Left colon (tissue), 2 donors: ENCODE measurements at regions of chr4 and their contacts with region 1.

Region 1: DNA sequence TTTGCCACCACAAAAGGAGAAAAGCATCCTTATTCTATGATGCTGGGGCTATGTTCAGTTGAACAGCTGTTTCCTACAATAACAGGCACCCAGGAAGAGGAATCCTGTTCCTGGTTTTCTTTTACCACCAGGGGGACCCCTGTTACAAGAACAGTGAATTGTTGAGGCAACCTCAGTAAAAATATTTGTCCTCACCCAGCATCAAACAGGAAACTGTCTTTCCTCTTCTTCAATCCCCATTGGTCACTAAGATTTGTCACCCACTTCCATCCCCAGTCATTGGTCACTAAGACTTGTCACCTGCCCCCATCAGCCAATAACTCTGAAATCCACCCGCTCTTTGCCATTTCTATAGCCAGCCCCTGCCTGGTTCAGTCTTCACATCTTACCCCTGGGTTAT is 143.5 kb upstream of the GALNT7 start:
- DNase-seq: peak; percentile 33 to 35
- ATAC-seq: peak; percentile 95

Region 2: DNA sequence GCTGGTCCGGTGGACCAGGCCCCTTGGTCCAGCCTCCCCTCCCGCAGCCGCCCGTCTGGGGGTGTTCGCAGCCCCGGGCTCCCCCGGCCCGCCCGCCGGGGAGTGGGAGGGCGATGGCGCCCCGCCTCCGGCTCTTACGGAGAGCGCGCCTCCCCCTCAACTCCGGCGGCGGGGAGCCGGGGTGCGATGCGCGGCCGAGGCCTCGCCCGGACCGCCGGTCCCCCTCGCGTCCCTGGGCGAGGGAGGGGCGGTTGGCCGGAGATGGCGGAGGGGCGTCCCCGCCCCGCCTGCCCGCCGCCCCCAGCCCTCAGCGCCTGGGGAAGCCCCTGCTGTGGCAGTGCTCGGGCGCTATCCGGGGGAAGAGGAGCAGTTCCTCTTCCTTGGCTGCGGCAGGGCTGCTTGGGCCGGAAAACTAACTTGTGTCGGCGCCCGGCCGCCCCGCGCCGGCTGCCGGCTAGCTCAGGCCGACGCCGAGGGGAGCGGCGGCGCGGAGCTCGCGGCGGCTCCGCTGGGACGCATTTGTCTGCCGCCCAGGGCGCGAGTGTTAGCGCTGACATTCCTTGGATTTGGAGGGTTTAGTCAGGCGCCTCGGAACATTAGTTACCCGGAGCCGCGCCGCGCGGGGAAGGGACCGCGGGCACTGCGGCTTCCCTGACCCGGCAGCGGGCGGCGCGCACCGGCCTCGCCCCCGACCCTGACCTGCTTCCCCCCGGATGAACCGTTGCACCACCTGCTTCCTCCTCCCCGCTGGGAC is 144.5 kb after region 1 on chr4:
- intact Hi-C with region 1: loop called in 1 of 2 experiments (anchors 10 kb)
- DNase-seq: peak; percentile 59 to 69
- ATAC-seq: peak; percentile 36

Region 3: DNA sequence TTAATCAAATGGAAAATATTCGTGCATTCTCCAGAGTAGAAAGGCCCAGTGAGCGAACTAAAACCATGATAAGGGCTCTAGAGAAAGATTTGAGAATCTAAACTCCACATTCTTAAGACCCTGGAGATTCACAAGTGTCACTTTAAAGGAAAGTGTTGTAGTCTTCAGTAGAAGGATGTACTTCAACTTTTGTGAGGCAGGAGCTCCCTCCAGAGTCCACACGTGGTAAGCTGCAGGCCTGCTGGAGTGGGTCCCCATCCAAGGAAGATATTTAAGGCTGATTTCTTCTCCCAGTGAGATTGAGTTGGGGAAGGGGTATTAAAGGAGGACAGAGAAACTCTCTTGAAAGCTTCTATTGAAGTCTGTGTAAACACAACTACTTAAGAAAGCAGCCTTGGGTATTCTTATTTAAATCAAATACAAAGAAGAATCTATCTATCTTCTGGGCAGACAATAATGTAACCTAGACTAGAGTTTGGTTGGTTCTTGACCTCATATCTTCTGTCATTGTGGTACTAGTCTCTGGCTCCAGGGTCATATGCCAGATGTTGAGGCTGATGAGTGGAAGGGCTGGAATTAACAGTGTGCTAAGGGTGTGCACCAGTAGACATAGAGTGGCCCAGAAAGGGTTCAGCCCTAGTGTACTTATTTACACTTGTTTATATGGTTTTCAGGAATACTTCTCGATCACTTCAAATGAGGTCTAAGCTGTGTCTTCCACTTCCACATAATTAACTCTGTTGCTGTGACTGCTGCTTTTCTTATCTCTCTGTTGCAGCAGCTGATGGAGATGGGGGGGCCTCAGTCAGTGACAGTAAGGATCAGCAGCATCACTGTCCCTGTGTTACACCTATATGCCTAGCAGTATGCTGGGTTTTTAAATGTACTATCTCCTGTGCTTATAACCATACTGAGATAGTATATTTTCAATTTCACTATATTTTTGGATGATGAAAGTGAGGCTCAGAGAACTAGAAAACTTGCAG is 232.9 kb after region 1 on chr4:
- intact Hi-C with region 1: loop called in 1 of 2 experiments (anchors 5 kb)
- DNase-seq: peak; percentile 52 to 59
- ATAC-seq: peak; percentile 85